Cardiac septum (tissue), 1 donor: ENCODE measurements at regions of chr5 and their contacts with region 1.

Region 1: DNA sequence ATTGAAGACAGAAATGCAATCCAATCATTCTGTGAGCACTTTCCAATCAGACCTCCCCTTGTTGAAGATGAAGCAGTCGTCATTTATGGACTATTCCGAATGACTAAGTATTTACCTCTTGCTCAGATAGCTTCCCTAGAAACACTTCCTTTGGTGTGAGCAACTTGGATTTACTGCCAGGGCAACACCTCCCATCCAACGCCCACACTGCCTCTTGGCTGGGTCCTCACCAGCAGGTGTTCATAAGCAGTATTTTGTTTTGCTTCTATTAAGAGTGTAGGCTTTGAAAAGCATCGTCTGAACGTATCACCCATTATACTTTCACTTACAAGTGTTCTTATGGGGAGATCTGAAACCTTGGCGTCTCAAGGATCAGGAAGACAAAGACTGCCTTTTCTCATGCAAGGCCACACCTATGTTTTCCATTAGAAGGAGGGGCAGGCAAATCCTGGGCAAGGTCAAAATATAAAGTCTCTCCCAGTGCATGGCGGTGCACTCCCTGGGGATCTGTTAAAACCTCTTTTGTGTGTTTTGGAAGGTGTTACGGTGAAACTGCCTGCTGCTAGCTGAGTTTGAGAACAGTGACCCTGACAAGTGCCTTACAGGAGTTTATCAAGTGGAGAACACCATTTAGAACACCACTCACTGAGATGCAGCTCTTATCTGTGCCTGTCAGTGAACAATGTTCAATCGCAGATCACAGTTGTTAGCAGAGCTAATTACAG is 10.6 kb upstream of the MARCHF3 start:
- DNase-seq: no peak

Region 2: GRCh38 chr5:126846344-126846743 is 194.6 kb before region 1 on chr5:
- intact Hi-C with region 1: loop called (anchors 5 kb)
- DNase-seq: no peak

Region 3: GRCh38 chr5:127070243-127070642 is 29.3 kb after region 1 on chr5:
- intact Hi-C with region 1: loop called (anchors 1 kb)
- DNase-seq: no peak